ENCODE measurements at regions of chr7 and their contacts with region 1.

Region 1: GRCh38 chr7:32179567-32179966 is 109.4 kb upstream of the PDE1C start:
- DNase-seq: no peak
- ATAC-seq: no peak
- H3K4me3 ChIP-seq: no peak overlapping the region
- H3K27ac ChIP-seq: no peak overlapping the region
- H3K4me1 ChIP-seq: peaks cover 0 to 5% (median 0%) of the 10 kb centered on the region in 12 donors
- H3K27me3 ChIP-seq: no peaks in the 10 kb centered on the region
- CTCF ChIP-seq: no peak
- POLR2A ChIP-seq: no peak

Region 2: DNA sequence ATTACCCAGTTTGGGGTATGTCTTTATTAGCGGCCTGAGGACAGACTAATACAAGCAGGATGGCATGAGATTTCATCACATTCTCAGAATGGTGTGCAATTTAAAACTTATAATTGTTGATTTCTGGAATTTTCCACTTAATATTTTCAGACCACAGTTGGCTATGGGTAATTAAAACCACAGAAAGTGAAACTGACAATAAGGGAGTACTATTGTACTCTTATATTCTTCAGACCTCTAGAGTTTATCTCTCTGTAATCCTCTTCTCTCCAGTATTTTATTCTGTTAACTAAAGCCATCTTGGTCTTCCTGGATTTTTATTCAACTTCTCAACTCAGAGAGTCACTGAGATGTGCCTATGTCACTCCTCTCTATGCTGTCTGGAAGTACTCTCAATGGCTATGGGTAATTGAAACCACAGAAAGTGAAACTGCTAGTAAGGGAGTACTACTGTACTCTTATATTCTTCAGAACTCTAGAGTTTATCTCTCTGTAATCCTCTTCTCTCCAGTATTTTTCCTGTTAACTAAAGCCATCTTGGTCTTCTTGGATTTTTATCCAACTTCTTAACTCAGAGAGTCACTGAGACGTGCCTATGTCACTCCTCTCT is 374.3 kb before region 1 on chr7:
- intact Hi-C with region 1: loop called in 2 of 10 experiments (anchors 10 kb)
- DNase-seq: no peak
- ATAC-seq: no peak
- H3K4me3 ChIP-seq: no peak overlapping the region
- H3K27ac ChIP-seq: peak overlapping the region in 1 of 12 donors; percentile 33
- H3K4me1 ChIP-seq: peaks cover 0 to 10% (median 0%) of the 10 kb centered on the region in 12 donors
- H3K27me3 ChIP-seq: no peaks in the 10 kb centered on the region
- CTCF ChIP-seq: no peak
- POLR2A ChIP-seq: no peak

Region 3: GRCh38 chr7:31811650-31812461 is 367.7 kb before region 1 on chr7:
- intact Hi-C with region 1: loop called in 2 of 10 experiments (anchors 10 kb)
- DNase-seq: peak in 4 of 5 donors; percentile 11 to 42 (median 24)
- ATAC-seq: peak; percentile 15 to 80 (median 69)
- H3K4me3 ChIP-seq: no peak overlapping the region
- H3K27ac ChIP-seq: peak overlapping the region in 3 of 12 donors; percentile 8 to 84 (median 16)
- H3K4me1 ChIP-seq: peaks cover 0 to 16% (median 0%) of the 10 kb centered on the region in 12 donors
- H3K27me3 ChIP-seq: no peaks in the 10 kb centered on the region
- CTCF ChIP-seq: no peak
- POLR2A ChIP-seq: no peak